Activated naive CD4-positive, alpha-beta T cell treated with anti-CD3 and anti-CD28 coated beads for 36 hours (primary cell): ENCODE measurements at regions of chr12 and their contacts with region 1.

Region 1: GRCh38 chr12:57111031-57111734 is at the start of gene STAT6:
- DNase-seq: peak; percentile 92
- H3K4me3 Mint-ChIP-seq: peak within 1 kb of the TSS; percentile 92
- H3K27ac Mint-ChIP-seq: peak within 1 kb of the TSS; percentile 94
- H3K4me1 Mint-ChIP-seq: peaks cover 45% of the 10 kb centered on the region
- H3K27me3 Mint-ChIP-seq: no peaks in the 10 kb centered on the region
- total RNA-seq, gene STAT6: 188 to 193 TPM

Region 2: DNA sequence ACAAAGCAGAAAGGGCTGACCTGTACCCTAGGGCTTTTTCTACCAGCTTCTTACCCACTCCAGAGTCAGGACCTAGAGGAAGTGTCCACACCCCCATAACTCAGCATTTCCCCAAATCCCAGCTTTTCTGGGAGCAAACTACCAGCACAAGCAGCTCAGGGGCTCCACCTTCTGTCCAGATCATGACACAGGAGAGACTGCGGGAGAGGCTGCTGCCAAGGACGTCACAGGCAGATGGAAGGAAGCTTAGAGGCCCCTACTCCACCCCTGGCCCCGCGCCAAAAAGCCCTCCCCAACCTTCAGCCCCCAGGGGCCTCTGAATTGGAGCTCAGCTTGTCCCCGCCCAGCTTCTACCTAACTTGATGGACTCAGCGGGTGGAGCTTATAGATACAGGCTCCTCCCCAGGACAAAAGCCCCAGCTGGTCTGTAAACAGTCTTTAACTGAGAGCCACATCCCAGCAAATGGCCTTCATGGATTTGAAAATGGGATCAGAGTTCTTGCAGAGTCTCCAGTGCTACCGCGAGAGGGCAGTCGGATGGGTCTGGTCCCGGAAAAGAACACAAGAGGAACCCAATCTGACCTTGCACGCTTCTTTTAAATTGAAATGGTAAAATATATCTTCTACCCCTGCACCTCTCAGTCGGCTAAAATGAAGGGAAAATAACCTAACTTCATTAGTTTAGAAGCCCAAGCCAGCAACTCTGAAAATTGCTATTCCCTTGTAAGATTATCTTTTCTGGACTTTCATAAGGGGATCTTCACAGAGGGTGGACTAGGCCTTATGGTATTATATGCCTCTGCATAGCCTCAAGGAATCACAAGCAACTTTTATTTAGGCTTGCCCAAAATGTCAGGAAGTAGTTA is 474.3 kb before region 1 on chr12:
- CTCF ChIA-PET with region 1: no interaction called
- intact Hi-C with region 1: loop called (anchors 1 kb)
- DNase-seq: peak; percentile 97
- H3K4me3 Mint-ChIP-seq: peak overlapping the region; percentile 86
- H3K27ac Mint-ChIP-seq: peak overlapping the region; percentile 91
- H3K4me1 Mint-ChIP-seq: peaks cover 62% of the 10 kb centered on the region
- H3K27me3 Mint-ChIP-seq: no peaks in the 10 kb centered on the region

Region 3: DNA sequence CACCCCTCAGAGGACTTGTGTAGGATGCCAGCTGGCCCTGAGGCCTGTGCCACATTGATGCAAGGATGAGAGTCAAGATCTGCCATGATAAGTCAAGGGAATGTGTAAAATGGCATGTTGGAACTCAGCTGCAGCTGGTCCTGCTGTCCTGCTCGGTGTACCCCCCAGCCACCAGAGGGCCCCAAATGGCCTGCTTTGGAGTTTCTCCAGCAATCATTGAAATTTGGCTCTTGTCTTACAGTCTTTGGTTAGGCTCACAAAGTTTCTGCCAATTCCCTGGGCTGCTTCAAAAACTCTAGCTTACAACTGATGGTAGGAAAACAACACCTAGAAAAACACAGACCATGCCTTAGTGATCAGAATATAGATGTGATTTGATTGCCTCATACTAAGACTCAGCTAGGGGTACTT is 271.3 kb before region 1 on chr12:
- CTCF ChIA-PET with region 1: interaction called, 3 read pairs
- intact Hi-C with region 1: loop called (anchors 2 kb)
- DNase-seq: peak; percentile 70
- H3K4me3 Mint-ChIP-seq: no peak overlapping the region
- H3K27ac Mint-ChIP-seq: no peak overlapping the region
- H3K4me1 Mint-ChIP-seq: peaks cover 17% of the 10 kb centered on the region
- H3K27me3 Mint-ChIP-seq: no peaks in the 10 kb centered on the region

Region 4: DNA sequence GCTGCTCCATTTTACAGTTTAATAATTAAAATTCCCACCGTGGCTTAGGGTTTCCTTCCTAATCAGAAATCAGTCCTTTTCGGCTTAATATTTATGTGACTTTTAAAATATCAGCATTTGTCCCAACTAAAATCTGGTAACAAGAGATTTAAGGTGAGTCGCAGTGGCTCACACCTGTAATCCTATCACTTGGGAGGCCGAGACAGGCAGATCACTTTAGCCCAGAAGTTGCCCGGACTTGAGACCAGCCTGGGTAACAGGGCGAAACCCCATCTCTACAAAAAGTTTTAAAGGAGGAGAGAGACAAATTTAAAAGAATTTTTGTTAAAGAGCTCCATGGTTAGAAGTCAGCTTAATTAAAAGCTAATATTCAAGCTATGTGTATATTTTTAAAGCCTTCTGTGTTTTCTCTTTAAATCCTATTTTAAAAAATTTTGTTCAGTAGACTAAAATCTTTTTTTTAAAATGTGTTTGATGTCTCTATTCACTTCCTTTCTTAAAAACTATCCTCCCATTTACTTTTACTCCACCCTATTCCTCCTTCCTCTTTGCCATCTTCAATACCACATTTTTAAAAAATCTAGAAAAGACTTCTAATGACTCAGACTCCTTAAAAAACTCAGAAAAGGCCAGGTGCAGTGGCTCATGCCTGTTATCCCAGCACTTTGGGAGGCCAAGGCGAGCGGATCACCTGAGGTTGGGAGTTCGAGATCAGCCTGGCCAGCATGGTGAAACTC is 91.0 kb before region 1 on chr12:
- CTCF ChIA-PET with region 1: interaction called, 11 read pairs
- intact Hi-C with region 1: no loop called
- DNase-seq: no peak
- H3K4me3 Mint-ChIP-seq: no peak overlapping the region
- H3K27ac Mint-ChIP-seq: no peak overlapping the region
- H3K4me1 Mint-ChIP-seq: peaks cover 29% of the 10 kb centered on the region
- H3K27me3 Mint-ChIP-seq: no peaks in the 10 kb centered on the region

Region 5: GRCh38 chr12:57069523-57069922 is 41.7 kb before region 1 on chr12:
- CTCF ChIA-PET with region 1: interaction called, 109 read pairs
- intact Hi-C with region 1: loop called (anchors 1 kb)
- DNase-seq: peak; percentile 76
- H3K4me3 Mint-ChIP-seq: peak overlapping the region; percentile 23
- H3K27ac Mint-ChIP-seq: peak overlapping the region; percentile 93
- H3K4me1 Mint-ChIP-seq: peaks cover 71% of the 10 kb centered on the region
- H3K27me3 Mint-ChIP-seq: no peaks in the 10 kb centered on the region

Region 6: GRCh38 chr12:57124259-57124877 is 13.2 kb after region 1 on chr12:
- CTCF ChIA-PET with region 1: interaction called, 111 read pairs
- intact Hi-C with region 1: no loop called
- DNase-seq: peak; percentile 90
- H3K4me3 Mint-ChIP-seq: no peak overlapping the region
- H3K27ac Mint-ChIP-seq: no peak overlapping the region
- H3K4me1 Mint-ChIP-seq: peaks cover under 1% of the 10 kb centered on the region
- H3K27me3 Mint-ChIP-seq: no peaks in the 10 kb centered on the region

Region 7: GRCh38 chr12:57430931-57431720 is 319.9 kb after region 1 on chr12 and contains the start of gene R3HDM2:
- CTCF ChIA-PET with region 1: no interaction called
- intact Hi-C with region 1: no loop called
- DNase-seq: peak; percentile 97
- H3K4me3 Mint-ChIP-seq: peak within 1 kb of the TSS; percentile 94
- H3K27ac Mint-ChIP-seq: peak within 1 kb of the TSS; percentile 98
- H3K4me1 Mint-ChIP-seq: peaks cover 37% of the 10 kb centered on the region
- H3K27me3 Mint-ChIP-seq: no peaks in the 10 kb centered on the region
- total RNA-seq, gene R3HDM2: 42.2 to 44.8 TPM

Region 8: GRCh38 chr12:57693659-57694458 is 582.7 kb after region 1 on chr12 and contains the start of gene OS9:
- CTCF ChIA-PET with region 1: no interaction called
- intact Hi-C with region 1: loop called (anchors 5 kb)
- DNase-seq: peak; percentile 99
- H3K4me3 Mint-ChIP-seq: no peak within 1 kb of the TSS
- H3K27ac Mint-ChIP-seq: no peak within 1 kb of the TSS
- H3K4me1 Mint-ChIP-seq: peaks cover 3% of the 10 kb centered on the region
- H3K27me3 Mint-ChIP-seq: no peaks in the 10 kb centered on the region
- total RNA-seq, gene OS9: 60.7 to 60.9 TPM